ENCODE measurements at regions of chr6 and their contacts with region 1.

Region 1: GRCh38 chr6:131063028-131063763 is at the start of gene EPB41L2:
- DNase-seq: peak; percentile 91
- ATAC-seq: peak; percentile 87
- H3K4me3 ChIP-seq: peak within 1 kb of the TSS; percentile 70 to 92 (median 86)
- H3K27ac ChIP-seq: peak within 1 kb of the TSS; percentile 79
- H3K4me1 ChIP-seq: peaks cover 57% of the 10 kb centered on the region
- H3K27me3 ChIP-seq: no peaks in the 10 kb centered on the region; a peak in 1 of 5 replicates
- CTCF ChIP-seq: no peak
- EP300 ChIP-seq: no peak; a peak in 1 of 4 replicates
- POLR2A ChIP-seq: peak; percentile 76 to 87
- RAD21 ChIP-seq: peak; percentile 40; the same call in 1 of the 2 replicates
- total RNA-seq, gene EPB41L2: 41.7 and 42.1 TPM in 2 replicates

Region 2: DNA sequence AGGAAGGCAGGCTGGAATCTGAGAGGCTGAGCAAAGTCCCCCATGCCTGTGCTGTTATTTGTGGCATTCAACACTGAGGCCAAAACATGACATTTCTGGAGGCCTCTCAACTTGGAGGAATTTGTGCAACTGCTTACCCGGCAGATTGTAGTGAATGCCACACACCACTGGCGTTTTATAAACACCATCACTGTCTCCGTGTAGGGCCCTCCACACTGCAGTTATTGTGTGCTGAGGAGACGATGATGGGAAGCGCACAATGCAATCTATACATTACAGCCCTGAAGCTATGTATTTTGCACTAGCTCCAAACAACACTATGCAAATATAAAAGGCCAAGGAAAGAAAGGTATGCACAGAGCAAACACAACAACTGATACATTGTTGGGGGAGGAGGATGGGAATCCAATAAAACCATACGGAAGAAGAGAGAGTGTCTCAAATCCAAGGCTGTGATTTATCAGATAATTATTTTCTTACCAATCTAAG is 129.4 kb before region 1 on chr6:
- CTCF ChIA-PET with region 1: no interaction called
- POLR2A ChIA-PET with region 1: interaction called, 4 read pairs
- in situ Hi-C with region 1: no loop called
- intact Hi-C with region 1: loop called (anchors 1 kb)
- DNase-seq: peak; percentile 98
- ATAC-seq: peak; percentile 97
- H3K4me3 ChIP-seq: peak overlapping the region in 2 of 3 experiments; percentile 34 to 47; a peak in 3 of 6 replicates
- H3K27ac ChIP-seq: peak overlapping the region; percentile 73
- H3K4me1 ChIP-seq: peaks cover 75% of the 10 kb centered on the region
- H3K27me3 ChIP-seq: no peaks in the 10 kb centered on the region
- CTCF ChIP-seq: no peak
- EP300 ChIP-seq: peak; percentile 84 to 95; a peak in 3 of 4 replicates
- POLR2A ChIP-seq: no peak
- RAD21 ChIP-seq: no peak; the same call in none of the 2 replicates

Region 3: DNA sequence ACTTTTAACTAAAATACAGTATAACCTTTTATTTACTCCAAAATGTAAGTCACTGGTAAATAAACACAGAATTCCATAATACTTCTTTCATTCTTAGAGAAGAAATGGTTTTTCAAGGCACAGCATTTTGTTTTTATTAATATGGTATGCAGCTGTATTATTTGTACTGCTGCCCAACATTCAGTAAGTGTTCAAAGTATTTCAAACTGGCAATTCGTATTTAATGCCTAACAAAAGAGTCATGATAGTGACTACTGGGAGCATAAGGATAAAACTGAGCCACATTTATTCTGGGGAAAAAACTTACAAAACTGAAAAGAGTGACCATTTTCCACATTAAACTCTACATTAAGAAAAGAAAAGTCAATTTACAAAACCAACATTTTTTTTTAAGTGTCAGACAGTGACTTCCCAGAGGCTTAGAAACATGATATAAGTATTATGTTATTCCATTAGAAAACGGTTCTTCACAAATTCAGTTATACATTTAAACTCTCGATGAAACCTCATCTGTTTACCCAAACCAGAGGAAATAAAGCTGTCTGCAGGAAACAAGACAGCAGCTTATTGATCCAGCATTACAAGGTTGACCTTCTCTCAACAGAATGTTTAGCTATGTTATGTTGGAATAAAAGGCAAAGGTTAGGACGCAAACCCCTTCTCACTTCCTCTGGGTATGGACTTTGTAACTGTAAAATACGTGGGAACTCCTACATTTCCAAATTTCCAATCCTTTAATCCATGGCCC is 24.4 kb before region 1 on chr6:
- CTCF ChIA-PET with region 1: no interaction called
- POLR2A ChIA-PET with region 1: interaction called, 3 read pairs
- in situ Hi-C with region 1: no loop called
- intact Hi-C with region 1: loop called (anchors 1 kb)
- DNase-seq: peak; percentile 96
- ATAC-seq: peak; percentile 98
- H3K4me3 ChIP-seq: peak overlapping the region; percentile 17 to 33 (median 27); a peak in 4 of 6 replicates
- H3K27ac ChIP-seq: peak overlapping the region; percentile 83
- H3K4me1 ChIP-seq: peaks cover 98% of the 10 kb centered on the region
- H3K27me3 ChIP-seq: no peaks in the 10 kb centered on the region
- CTCF ChIP-seq: no peak
- EP300 ChIP-seq: peak; percentile 58 to 98; a peak in 3 of 4 replicates
- POLR2A ChIP-seq: no peak
- RAD21 ChIP-seq: no peak

Region 4: GRCh38 chr6:131084982-131085381 is 21.8 kb after region 1 on chr6:
- CTCF ChIA-PET with region 1: no interaction called
- POLR2A ChIA-PET with region 1: no interaction called
- in situ Hi-C with region 1: no loop called
- intact Hi-C with region 1: loop called (anchors 1 kb)
- DNase-seq: peak; percentile 49
- ATAC-seq: peak; percentile 100
- H3K4me3 ChIP-seq: no peak overlapping the region
- H3K27ac ChIP-seq: no peak overlapping the region
- H3K4me1 ChIP-seq: peaks cover 18% of the 10 kb centered on the region; the same call in 1 of the 2 replicates
- H3K27me3 ChIP-seq: no peaks in the 10 kb centered on the region; a peak in 1 of 5 replicates
- CTCF ChIP-seq: peak; percentile 63
- EP300 ChIP-seq: no peak
- POLR2A ChIP-seq: no peak
- RAD21 ChIP-seq: peak; percentile 71

Region 5: GRCh38 chr6:131107151-131107550 is 44.0 kb after region 1 on chr6:
- CTCF ChIA-PET with region 1: no interaction called
- POLR2A ChIA-PET with region 1: no interaction called
- in situ Hi-C with region 1: no loop called
- intact Hi-C with region 1: loop called (anchors 2 kb)
- DNase-seq: peak; percentile 80
- ATAC-seq: peak; percentile 80
- H3K4me3 ChIP-seq: no peak overlapping the region
- H3K27ac ChIP-seq: no peak overlapping the region
- H3K4me1 ChIP-seq: peaks cover 47% of the 10 kb centered on the region
- H3K27me3 ChIP-seq: peaks cover 0 to 1% of the 10 kb centered on the region in 2 experiments; a peak in 1 of 5 replicates
- CTCF ChIP-seq: no peak
- EP300 ChIP-seq: peak in 1 of 2 experiments; percentile 15; a peak in 1 of 4 replicates
- POLR2A ChIP-seq: no peak
- RAD21 ChIP-seq: no peak

Region 6: GRCh38 chr6:131116749-131117360 is 53.7 kb after region 1 on chr6:
- CTCF ChIA-PET with region 1: no interaction called
- POLR2A ChIA-PET with region 1: no interaction called
- in situ Hi-C with region 1: no loop called
- intact Hi-C with region 1: loop called (anchors 2 kb)
- DNase-seq: peak; percentile 68
- ATAC-seq: peak; percentile 69
- H3K4me3 ChIP-seq: no peak overlapping the region
- H3K27ac ChIP-seq: no peak overlapping the region
- H3K4me1 ChIP-seq: peaks cover 14% of the 10 kb centered on the region
- H3K27me3 ChIP-seq: no peaks in the 10 kb centered on the region
- CTCF ChIP-seq: peak; percentile 80
- EP300 ChIP-seq: no peak
- POLR2A ChIP-seq: no peak
- RAD21 ChIP-seq: peak; percentile 77; the same call in 1 of the 2 replicates

Measured in HepG2 (cell line).